B cell (primary cell): ENCODE measurements at regions of chr15 and their contacts with region 1.

Region 1: GRCh38 chr15:68820295-68821189 is at the start of gene ANP32A:
- DNase-seq: peak; percentile 98
- ATAC-seq: peak; percentile 71
- H3K4me3 ChIP-seq: peak within 1 kb of the TSS; percentile 71 to 98 (median 94)
- H3K4me3 Mint-ChIP-seq: peak within 1 kb of the TSS; percentile 96
- H3K27ac ChIP-seq: peak within 1 kb of the TSS; percentile 90 to 93
- H3K27ac Mint-ChIP-seq: peak within 1 kb of the TSS; percentile 98
- H3K4me1 ChIP-seq: peaks cover 21 to 22% of the 10 kb centered on the region in 2 donors
- H3K4me1 Mint-ChIP-seq: peaks cover 27% of the 10 kb centered on the region
- H3K27me3 ChIP-seq: no peaks in the 10 kb centered on the region
- H3K27me3 Mint-ChIP-seq: no peaks in the 10 kb centered on the region
- CTCF ChIP-seq: no peak
- total RNA-seq, gene ANP32A: 153 and 163 TPM in 2 replicates

Region 2: DNA sequence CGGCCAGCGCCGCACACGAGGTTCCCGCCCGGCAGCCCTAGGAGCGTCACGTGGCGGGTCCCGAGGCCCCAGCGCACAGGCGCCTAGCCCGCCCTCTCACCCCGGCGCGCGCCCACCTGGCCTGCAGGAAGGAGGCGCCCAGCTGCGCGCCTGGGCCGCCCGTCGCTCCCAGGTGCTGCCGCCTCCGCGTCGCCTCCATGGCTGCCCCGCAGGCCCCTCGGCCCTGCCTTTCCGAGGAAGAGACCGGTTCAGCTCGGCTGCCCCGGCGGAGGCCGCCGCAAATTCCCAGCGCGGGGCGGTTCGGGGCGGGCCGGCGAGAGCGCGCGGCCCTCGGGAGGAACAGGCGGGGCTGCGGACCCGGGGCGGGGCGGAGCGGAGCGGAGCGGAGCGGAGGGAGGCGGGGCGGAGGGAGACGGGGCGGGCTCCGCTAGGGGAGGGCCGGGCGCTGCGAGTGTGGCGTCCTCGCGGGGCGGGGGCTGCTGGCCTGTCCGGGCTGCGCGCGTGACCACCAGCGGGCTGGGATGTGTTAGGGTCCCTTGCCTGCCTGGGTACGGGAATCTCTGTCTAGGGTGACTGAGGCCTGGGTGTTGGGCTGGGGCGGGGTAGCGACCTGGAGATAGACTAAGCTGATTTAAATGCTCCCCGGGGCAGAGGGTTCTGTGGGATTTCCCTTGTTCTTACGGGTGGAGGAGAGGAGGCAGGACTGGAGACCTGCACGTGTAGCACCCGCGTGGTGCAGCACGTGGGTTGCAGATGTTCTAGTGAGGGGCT is 591.0 kb before region 1 on chr15 and contains the start of gene CLN6:
- CTCF ChIA-PET with region 1: no interaction called
- POLR2A ChIA-PET with region 1: no interaction called
- intact Hi-C with region 1: loop called (anchors 5 kb)
- DNase-seq: peak; percentile 93
- ATAC-seq: peak; percentile 87
- H3K4me3 ChIP-seq: peak within 1 kb of the TSS; percentile 57 to 76 (median 73)
- H3K4me3 Mint-ChIP-seq: peak within 1 kb of the TSS; percentile 96
- H3K27ac ChIP-seq: peak within 1 kb of the TSS; percentile 60 to 88
- H3K27ac Mint-ChIP-seq: peak within 1 kb of the TSS; percentile 92
- H3K4me1 ChIP-seq: peaks cover 23 to 42% of the 10 kb centered on the region in 2 donors
- H3K4me1 Mint-ChIP-seq: peaks cover 45% of the 10 kb centered on the region
- H3K27me3 ChIP-seq: peaks cover 0 to 2% (median 0%) of the 10 kb centered on the region in 4 experiments
- H3K27me3 Mint-ChIP-seq: no peaks in the 10 kb centered on the region
- CTCF ChIP-seq: no peak
- total RNA-seq, gene CLN6: 22.8 and 31.5 TPM in 2 replicates

Region 3: DNA sequence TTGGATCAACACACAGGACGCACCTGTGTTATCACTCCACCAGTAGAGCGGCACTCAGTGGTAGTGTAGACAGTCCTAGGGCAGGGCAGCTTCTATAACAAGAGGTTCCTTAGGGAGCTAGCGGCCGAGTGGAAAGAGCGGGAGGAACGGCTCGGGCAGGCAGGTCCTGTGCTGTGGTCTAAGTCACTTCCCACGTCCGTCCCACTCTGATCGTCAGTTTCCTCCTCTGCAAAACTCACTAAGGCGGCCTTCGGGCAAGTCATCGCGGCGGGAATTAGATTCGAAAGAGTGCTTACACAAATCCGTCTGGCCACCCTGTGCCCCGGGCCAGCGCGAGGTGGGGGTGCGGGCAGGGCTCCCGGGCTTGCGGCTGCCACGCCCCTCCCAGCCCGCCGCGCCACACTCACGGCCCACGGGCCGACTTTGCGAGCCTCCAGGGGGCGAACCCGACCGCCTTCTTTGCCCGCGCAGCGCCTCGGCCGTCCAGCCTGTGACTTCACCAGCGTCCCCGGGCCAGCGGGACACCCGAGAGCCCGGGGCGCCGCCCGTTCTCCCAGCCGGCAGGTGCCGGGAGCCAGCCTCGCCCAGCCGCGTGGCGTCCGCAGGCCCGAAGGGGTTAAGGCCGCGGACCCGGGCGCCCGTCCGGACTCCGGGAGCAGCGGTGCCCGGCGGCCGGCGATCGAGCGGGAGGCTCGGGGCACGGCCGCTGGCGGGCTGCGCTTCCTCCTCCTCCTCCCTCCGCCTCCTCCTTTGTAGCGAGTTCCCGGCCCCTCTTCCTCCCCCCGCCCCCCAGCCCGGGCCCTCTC is 242.2 kb before region 1 on chr15:
- CTCF ChIA-PET with region 1: no interaction called
- POLR2A ChIA-PET with region 1: no interaction called
- intact Hi-C with region 1: loop called (anchors 5 kb)
- DNase-seq: peak; percentile 80
- ATAC-seq: peak; percentile 72
- H3K4me3 ChIP-seq: peak overlapping the region; percentile 54 to 77 (median 67)
- H3K4me3 Mint-ChIP-seq: peak overlapping the region; percentile 93
- H3K27ac ChIP-seq: peak overlapping the region; percentile 72 to 75
- H3K27ac Mint-ChIP-seq: peak overlapping the region; percentile 78
- H3K4me1 ChIP-seq: peaks cover 31 to 35% of the 10 kb centered on the region in 2 donors
- H3K4me1 Mint-ChIP-seq: peaks cover 44% of the 10 kb centered on the region
- H3K27me3 ChIP-seq: peaks cover 0 to 22% (median 3%) of the 10 kb centered on the region in 4 experiments
- H3K27me3 Mint-ChIP-seq: peaks cover 32% of the 10 kb centered on the region
- CTCF ChIP-seq: peak; percentile 49

Region 4: GRCh38 chr15:68795298-68795848 is 25.2 kb before region 1 on chr15:
- CTCF ChIA-PET with region 1: interaction called, 6 read pairs
- POLR2A ChIA-PET with region 1: interaction called, 15 read pairs
- intact Hi-C with region 1: loop called (anchors 1 kb)
- DNase-seq: peak; percentile 76
- ATAC-seq: peak; percentile 75
- H3K4me3 ChIP-seq: peak overlapping the region in 2 of 5 experiments; percentile 17 to 28
- H3K4me3 Mint-ChIP-seq: peak overlapping the region; percentile 73
- H3K27ac ChIP-seq: peak overlapping the region; percentile 58 to 74
- H3K27ac Mint-ChIP-seq: peak overlapping the region; percentile 80
- H3K4me1 ChIP-seq: peaks cover 68 to 82% of the 10 kb centered on the region in 2 donors
- H3K4me1 Mint-ChIP-seq: peaks cover 93% of the 10 kb centered on the region
- H3K27me3 ChIP-seq: no peaks in the 10 kb centered on the region
- H3K27me3 Mint-ChIP-seq: no peaks in the 10 kb centered on the region
- CTCF ChIP-seq: no peak

Region 5: DNA sequence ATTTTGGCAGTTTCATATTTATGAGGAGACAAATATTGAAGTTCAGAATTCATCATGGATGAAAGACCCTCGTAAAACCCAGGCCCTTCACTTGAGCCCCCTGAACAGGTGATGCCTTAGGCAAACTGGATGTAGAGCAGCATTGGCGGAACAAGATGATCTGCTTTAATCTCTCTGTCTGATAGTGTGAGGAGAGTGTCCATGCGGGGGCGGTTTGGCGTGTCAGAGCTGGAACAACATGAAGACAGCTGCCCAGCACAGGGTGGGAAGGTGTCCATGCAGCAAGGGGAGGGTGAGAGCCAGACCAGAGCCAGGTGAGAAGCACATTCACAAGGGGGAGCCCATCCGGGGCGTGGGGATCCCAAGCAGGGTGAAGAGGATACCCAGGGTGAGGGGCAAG is 31.9 kb after region 1 on chr15:
- CTCF ChIA-PET with region 1: no interaction called
- POLR2A ChIA-PET with region 1: no interaction called
- intact Hi-C with region 1: no loop called
- DNase-seq: no peak
- ATAC-seq: no peak
- H3K4me3 ChIP-seq: no peak overlapping the region
- H3K4me3 Mint-ChIP-seq: no peak overlapping the region
- H3K27ac ChIP-seq: no peak overlapping the region
- H3K27ac Mint-ChIP-seq: no peak overlapping the region
- H3K4me1 ChIP-seq: peaks cover 14 to 18% of the 10 kb centered on the region in 2 donors
- H3K4me1 Mint-ChIP-seq: peaks cover 15% of the 10 kb centered on the region
- H3K27me3 ChIP-seq: no peaks in the 10 kb centered on the region
- H3K27me3 Mint-ChIP-seq: peaks cover 3% of the 10 kb centered on the region
- CTCF ChIP-seq: no peak

Region 6: GRCh38 chr15:68875377-68876116 is 55.0 kb after region 1 on chr15:
- CTCF ChIA-PET with region 1: interaction called, 7 read pairs
- POLR2A ChIA-PET with region 1: no interaction called
- intact Hi-C with region 1: loop called (anchors 10 kb)
- DNase-seq: peak; percentile 90
- ATAC-seq: peak; percentile 75
- H3K4me3 ChIP-seq: no peak overlapping the region
- H3K4me3 Mint-ChIP-seq: peak overlapping the region; percentile 50
- H3K27ac ChIP-seq: no peak overlapping the region
- H3K27ac Mint-ChIP-seq: no peak overlapping the region
- H3K4me1 ChIP-seq: peaks cover 4% of the 10 kb centered on the region in 2 donors
- H3K4me1 Mint-ChIP-seq: peaks cover 3% of the 10 kb centered on the region
- H3K27me3 ChIP-seq: peaks cover 0 to 16% (median 8%) of the 10 kb centered on the region in 4 experiments
- H3K27me3 Mint-ChIP-seq: peaks cover 19% of the 10 kb centered on the region
- CTCF ChIP-seq: peak; percentile 85